Body of pancreas (tissue), 4 donors: ENCODE measurements at regions of chr10 and their contacts with region 1.

Region 1: GRCh38 chr10:68301790-68302502 is 29.9 kb upstream of the HNRNPH3 start:
- DNase-seq: peak in 1 of 4 donors; percentile 20
- ATAC-seq: peak; percentile 54
- H3K4me3 ChIP-seq: no peak overlapping the region
- H3K27ac ChIP-seq: peak overlapping the region in 1 of 4 donors; percentile 45
- H3K4me1 ChIP-seq: peaks cover 50% of the 10 kb centered on the region
- H3K27me3 ChIP-seq: no peaks in the 10 kb centered on the region
- CTCF ChIP-seq: peak; percentile 26 to 78 (median 70)
- POLR2A ChIP-seq: no peak

Region 2: GRCh38 chr10:68212721-68213352 is 89.1 kb before region 1 on chr10:
- intact Hi-C with region 1: loop called (anchors 10 kb)
- DNase-seq: peak in 1 of 4 donors; percentile 8
- ATAC-seq: peak; percentile 56
- H3K4me3 ChIP-seq: no peak overlapping the region
- H3K27ac ChIP-seq: no peak overlapping the region
- H3K4me1 ChIP-seq: no peaks in the 10 kb centered on the region
- H3K27me3 ChIP-seq: no peaks in the 10 kb centered on the region
- CTCF ChIP-seq: peak; percentile 15 to 66 (median 58)
- POLR2A ChIP-seq: no peak